ENCODE measurements at regions of chr2 and their contacts with region 1.

Region 1: GRCh38 chr2:230068016-230068650 is 591 bp downstream of the SLC16A14 start:
- DNase-seq: peak; percentile 51
- ATAC-seq: peak; percentile 64
- H3K4me3 Mint-ChIP-seq: peak overlapping the region; percentile 66
- H3K27ac Mint-ChIP-seq: peak overlapping the region; percentile 61
- H3K4me1 Mint-ChIP-seq: peaks cover 21% of the 10 kb centered on the region
- H3K27me3 Mint-ChIP-seq: peaks cover 27% of the 10 kb centered on the region

Region 2: DNA sequence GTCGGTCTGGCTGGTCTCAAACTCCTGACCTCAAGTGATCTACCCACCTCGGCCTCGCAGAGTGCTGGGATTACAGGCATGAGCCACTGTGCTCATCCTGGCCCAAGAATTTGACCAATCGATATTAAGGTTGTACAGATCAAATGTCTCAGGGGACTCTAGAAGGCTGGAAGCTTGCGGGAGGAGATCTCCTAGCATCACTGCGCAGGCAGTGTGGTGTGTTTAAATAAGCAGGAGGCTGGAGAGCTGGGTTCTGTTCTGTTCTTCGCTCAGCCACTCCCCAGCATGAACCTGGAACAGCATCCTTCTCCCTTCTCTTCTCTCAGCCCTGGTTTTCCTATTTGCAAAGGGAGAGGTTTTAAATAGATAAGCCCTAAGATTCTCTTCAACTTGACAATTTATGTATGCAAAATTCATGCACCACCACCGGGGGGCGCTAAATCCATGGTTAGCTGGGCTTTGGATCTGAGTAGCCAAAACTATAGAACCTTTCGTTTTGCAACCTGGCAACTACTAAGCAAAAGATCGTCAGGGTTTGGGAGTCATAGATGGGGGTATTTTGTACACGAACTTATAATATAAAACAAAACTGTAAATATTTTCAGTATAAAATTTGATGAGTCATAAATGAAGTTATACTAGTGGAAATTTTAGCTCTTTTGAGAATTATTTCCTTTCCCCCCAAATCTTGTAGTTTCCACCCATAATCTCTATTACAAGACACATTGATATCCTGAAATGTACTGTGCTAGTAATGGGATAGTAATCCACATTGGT is 60.0 kb before region 1 on chr2:
- CTCF ChIA-PET with region 1: interaction called, 26 read pairs
- POLR2A ChIA-PET with region 1: no interaction called
- DNase-seq: peak; percentile 88
- ATAC-seq: peak; percentile 76
- H3K4me3 Mint-ChIP-seq: no peak overlapping the region
- H3K27ac Mint-ChIP-seq: no peak overlapping the region
- H3K4me1 Mint-ChIP-seq: peaks cover 7% of the 10 kb centered on the region
- H3K27me3 Mint-ChIP-seq: no peaks in the 10 kb centered on the region

Region 3: DNA sequence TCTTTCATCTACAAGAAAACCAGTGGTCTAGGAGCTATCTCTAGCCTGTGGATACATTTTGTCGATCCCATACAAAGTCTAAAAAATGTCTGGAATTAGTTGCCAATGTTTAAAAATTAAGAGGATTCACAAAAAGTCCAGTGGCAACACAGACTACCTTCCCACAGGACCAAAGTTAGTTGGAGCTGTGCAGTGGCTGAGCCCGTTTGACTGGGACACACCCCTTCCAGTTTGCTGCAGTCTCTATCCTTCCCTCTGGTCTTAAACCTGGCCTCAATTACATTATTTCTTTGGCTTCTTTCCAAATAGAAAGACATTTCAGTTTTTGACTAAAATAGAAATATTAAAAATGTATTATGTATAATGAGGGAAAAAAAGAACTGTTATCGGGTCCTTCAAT is 18.0 kb before region 1 on chr2:
- CTCF ChIA-PET with region 1: interaction called, 15 read pairs
- POLR2A ChIA-PET with region 1: no interaction called
- DNase-seq: no peak
- ATAC-seq: no peak
- H3K4me3 Mint-ChIP-seq: no peak overlapping the region
- H3K27ac Mint-ChIP-seq: no peak overlapping the region
- H3K4me1 Mint-ChIP-seq: no peaks in the 10 kb centered on the region
- H3K27me3 Mint-ChIP-seq: no peaks in the 10 kb centered on the region